ENCODE measurements at regions of chr11 and their contacts with region 1.

Region 1: DNA sequence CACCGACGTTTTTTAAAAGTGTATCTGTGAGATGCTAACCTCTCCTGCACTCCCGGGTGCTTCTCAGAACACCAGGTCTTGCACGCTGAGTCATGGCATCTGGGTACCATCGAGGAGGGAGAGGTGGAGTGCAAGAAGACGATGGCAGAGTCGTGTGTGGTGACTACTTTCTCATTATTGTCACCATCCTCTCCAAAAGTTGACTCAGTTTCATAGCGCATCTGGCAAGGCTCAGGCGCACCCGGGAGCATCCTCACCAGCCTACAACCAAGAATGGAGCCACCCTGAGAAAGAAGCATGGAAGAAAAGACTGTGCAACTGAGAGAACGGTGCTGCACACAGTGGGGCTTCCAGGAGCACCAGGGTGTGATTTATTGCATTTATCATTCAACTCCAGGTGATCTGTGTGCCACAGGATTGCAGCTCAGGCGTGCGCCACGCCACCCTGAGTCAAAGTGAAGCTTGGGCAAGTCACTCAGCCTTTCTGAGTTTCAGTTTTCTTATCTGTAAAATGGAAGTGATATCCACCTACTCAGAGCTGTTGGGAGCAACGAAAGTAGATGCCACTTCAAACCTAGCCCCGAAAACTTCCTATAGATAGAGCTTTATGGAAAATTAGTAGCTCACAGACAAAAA is 65.4 kb downstream of the LINC01488 start:
- DNase-seq: peak; percentile 84
- ATAC-seq: peak; percentile 90
- H3K4me3 Mint-ChIP-seq: no peak overlapping the region
- H3K27ac Mint-ChIP-seq: peak overlapping the region; percentile 40
- H3K4me1 Mint-ChIP-seq: peaks cover 27% of the 10 kb centered on the region
- H3K27me3 Mint-ChIP-seq: peaks cover 45% of the 10 kb centered on the region

Region 2: GRCh38 chr11:69122642-69123431 is 424.0 kb before region 1 on chr11:
- CTCF ChIA-PET with region 1: no interaction called
- POLR2A ChIA-PET with region 1: no interaction called
- intact Hi-C with region 1: loop called in 1 of 2 experiments (anchors 2 kb)
- DNase-seq: peak; percentile 91
- ATAC-seq: peak; percentile 91
- H3K4me3 Mint-ChIP-seq: peak overlapping the region; percentile 12
- H3K27ac Mint-ChIP-seq: peak overlapping the region; percentile 19
- H3K4me1 Mint-ChIP-seq: peaks cover 41% of the 10 kb centered on the region
- H3K27me3 Mint-ChIP-seq: no peaks in the 10 kb centered on the region

Region 3: DNA sequence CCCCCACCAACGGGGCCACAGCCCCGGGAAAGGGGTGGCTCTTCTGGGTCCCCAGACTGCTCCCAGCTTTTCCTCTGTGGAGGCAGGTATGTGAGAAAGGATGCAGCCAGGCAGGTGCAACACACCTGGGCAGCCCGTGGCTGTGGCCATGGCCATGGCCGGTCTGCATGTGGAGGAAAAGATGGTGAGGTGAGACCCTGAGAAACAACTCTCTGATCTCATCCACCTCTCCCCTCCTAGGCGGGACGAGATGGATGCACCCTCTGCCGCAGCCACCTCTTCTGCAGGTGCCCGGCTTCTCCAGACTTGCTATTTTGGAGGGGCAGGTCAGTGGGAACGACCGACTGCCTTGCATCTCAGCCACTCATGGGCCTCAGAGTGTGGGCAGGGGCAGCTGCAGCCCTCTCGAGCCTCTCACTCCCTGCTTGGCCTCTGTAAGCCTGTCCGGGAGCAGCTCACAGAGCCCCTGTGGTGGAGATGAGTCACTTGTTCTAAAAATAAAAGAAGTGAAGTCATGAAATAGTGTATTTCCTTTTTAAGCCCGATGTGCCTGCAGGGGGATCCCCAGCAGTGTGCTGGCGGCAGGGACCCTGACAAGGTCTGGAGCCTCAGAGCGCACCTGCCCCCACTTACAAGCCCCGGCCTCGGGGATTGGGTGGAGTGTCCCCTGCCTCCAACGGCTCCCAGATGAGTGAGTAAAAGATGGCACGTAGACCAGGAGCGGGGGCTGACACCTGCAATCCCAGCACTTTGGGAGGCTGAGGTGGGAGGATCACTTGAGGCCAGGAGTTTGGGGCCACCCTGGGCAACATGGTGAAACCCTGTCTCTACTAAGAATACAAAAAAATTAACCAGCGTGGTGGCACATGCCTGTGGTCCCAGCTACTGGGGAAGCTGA is 380.4 kb before region 1 on chr11:
- CTCF ChIA-PET with region 1: interaction called, 3 read pairs
- POLR2A ChIA-PET with region 1: interaction called, 3 read pairs
- intact Hi-C with region 1: loop called in 1 of 2 experiments (anchors 5 kb)
- DNase-seq: peak; percentile 77
- ATAC-seq: peak; percentile 99
- H3K4me3 Mint-ChIP-seq: no peak overlapping the region
- H3K27ac Mint-ChIP-seq: peak overlapping the region; percentile 77
- H3K4me1 Mint-ChIP-seq: peaks cover 18% of the 10 kb centered on the region
- H3K27me3 Mint-ChIP-seq: no peaks in the 10 kb centered on the region

Region 4: GRCh38 chr11:69411257-69411924 is 135.5 kb before region 1 on chr11:
- CTCF ChIA-PET with region 1: no interaction called
- POLR2A ChIA-PET with region 1: no interaction called
- intact Hi-C with region 1: loop called in 1 of 2 experiments (anchors 1 kb)
- DNase-seq: no peak
- ATAC-seq: peak; percentile 80
- H3K4me3 Mint-ChIP-seq: no peak overlapping the region
- H3K27ac Mint-ChIP-seq: no peak overlapping the region
- H3K4me1 Mint-ChIP-seq: peaks cover 31% of the 10 kb centered on the region
- H3K27me3 Mint-ChIP-seq: peaks cover 13% of the 10 kb centered on the region

Region 5: GRCh38 chr11:69443138-69443967 is 103.5 kb before region 1 on chr11:
- CTCF ChIA-PET with region 1: no interaction called
- POLR2A ChIA-PET with region 1: no interaction called
- intact Hi-C with region 1: loop called in 1 of 2 experiments (anchors 1 kb)
- DNase-seq: peak; percentile 88
- ATAC-seq: peak; percentile 89
- H3K4me3 Mint-ChIP-seq: peak overlapping the region; percentile 48
- H3K27ac Mint-ChIP-seq: peak overlapping the region; percentile 14
- H3K4me1 Mint-ChIP-seq: peaks cover 16% of the 10 kb centered on the region
- H3K27me3 Mint-ChIP-seq: peaks cover 13% of the 10 kb centered on the region

Region 6: DNA sequence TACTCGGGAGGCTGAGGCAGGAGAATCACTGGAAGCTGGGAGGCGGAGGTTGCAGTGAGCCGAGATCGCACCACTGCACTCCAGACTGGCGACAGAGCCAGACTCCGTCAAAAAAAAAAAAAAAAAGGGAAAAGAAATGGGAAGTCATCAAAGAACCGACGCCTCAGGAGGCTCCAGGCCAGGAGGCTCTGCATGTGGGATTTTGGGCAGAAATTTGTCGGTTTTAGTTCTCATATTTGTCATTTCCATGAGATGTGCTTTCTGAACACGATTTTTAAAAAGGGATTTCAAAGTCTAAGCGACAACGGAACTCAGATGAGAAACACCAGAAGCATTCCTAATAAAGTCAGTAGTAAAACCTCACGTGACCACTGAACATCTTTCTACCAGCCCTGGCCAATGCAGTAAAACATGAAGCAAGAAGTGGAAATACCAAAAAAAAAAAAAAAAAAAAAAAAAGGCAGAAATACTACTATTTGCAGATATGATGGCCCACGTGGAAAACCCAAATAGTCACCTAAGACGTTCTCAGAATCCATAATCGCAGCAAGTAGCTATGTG is 129.0 kb after region 1 on chr11:
- CTCF ChIA-PET with region 1: interaction called, 7 read pairs
- POLR2A ChIA-PET with region 1: no interaction called
- intact Hi-C with region 1: loop called in 1 of 2 experiments (anchors 1 kb)
- DNase-seq: no peak
- ATAC-seq: no peak
- H3K4me3 Mint-ChIP-seq: peak overlapping the region; percentile 89
- H3K27ac Mint-ChIP-seq: no peak overlapping the region
- H3K4me1 Mint-ChIP-seq: peaks cover 20% of the 10 kb centered on the region
- H3K27me3 Mint-ChIP-seq: peaks cover 2% of the 10 kb centered on the region